ENCODE measurements at regions of chr3 and their contacts with region 1.

Region 1: DNA sequence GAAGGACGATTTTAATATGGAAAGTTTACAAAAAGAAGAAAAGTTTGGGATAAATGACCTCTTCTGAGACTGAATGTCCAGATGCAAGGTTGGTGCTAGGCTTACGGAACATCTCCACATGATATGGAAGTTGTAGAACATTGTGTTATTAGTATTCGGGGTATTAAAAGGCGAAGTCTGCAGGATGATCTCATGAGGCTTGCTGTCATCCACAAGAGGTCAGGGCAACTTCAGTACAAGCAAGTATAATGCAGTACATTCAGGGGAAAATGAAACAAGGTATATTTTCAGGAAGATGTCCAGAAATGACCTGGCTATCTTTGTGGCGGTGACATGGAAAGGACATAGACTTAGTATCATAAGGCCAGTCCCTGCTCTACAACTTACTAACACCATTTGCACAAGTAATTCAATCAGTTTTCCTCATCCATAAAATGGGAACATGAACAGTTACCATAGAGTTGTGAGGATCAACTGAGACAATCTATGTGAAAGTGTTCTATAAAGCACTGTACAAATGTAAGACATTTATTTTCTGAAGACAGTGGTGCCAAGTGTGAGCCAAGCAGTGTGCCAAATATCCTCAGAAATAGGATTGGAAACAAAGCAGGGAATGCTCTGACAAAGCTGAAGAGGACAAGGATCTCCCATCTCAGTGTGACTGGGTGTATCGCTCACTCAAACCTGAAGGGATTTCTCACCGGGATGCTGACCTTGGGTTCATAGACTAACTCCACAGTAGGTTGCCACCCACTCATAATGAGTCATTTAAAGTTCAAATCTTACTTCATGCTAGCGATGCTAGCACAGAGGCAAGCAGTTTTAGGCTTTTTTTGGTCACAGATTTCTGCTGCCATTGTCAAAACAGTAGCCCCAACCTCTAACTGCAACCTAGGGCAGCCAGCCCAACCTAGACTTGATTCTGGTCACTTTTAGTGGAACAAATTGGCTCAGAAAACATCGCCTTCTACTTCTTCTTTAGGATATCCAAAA is 118.3 kb downstream of the TIGIT start:
- DNase-seq: peak in 2 of 3 donors; percentile 32 to 56
- ATAC-seq: peak; percentile 58 to 85
- H3K4me3 ChIP-seq: no peak overlapping the region
- H3K27ac ChIP-seq: no peak overlapping the region
- H3K4me1 ChIP-seq: peaks cover 9% of the 10 kb centered on the region
- H3K27me3 ChIP-seq: no peaks in the 10 kb centered on the region

Region 2: DNA sequence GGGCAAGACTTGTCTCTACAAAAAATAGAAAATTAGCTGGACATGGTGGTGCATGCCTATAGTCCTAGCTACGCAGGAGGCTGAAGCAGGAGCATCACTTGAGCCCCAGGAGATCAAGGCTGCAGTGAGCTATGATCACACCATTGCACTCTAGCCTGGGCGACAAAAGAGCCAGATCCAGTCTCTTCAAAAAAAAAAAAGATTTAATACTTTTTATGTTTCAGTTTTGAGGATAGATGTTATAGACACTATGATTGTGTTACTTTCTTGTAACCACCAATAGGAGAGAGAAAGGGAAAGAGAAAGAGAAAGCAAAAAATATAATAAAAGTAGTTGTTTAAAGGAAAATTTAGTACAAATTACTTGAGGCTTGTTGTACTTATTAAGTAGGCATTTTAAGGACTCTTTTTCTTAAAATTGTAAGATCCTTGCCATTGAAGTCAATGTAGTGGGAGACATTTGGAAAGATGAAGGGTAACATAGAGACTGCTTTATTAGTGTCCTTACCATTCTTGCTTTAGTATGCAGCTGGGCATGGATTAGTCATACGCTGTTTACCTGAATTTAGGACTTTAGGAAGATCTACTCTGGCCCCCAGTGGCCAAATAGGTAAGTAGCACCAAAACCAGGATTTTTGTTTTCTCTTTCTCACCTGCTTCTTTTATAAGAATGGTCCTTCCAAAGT is 499.4 kb before region 1 on chr3:
- intact Hi-C with region 1: no loop called
- DNase-seq: no peak
- ATAC-seq: peak in 1 of 2 donors; percentile 57
- H3K4me3 ChIP-seq: no peak overlapping the region
- H3K27ac ChIP-seq: no peak overlapping the region
- H3K4me1 ChIP-seq: no peaks in the 10 kb centered on the region
- H3K27me3 ChIP-seq: no peaks in the 10 kb centered on the region

Region 3: GRCh38 chr3:114362815-114363214 is 49.3 kb before region 1 on chr3:
- intact Hi-C with region 1: loop called in 1 of 4 experiments (anchors 2 kb)
- DNase-seq: no peak
- ATAC-seq: peak in 1 of 2 donors; percentile 49
- H3K4me3 ChIP-seq: no peak overlapping the region
- H3K27ac ChIP-seq: no peak overlapping the region
- H3K4me1 ChIP-seq: peaks cover 2% of the 10 kb centered on the region
- H3K27me3 ChIP-seq: no peaks in the 10 kb centered on the region